Right ventricle myocardium inferior (tissue), 1 donor: ENCODE measurements at regions of chr10 and their contacts with region 1.

Region 1: GRCh38 chr10:103835096-103836050 is 20.0 kb downstream of the SH3PXD2A start:
- DNase-seq: peak; percentile 86
- ATAC-seq: peak; percentile 73

Region 2: GRCh38 chr10:103692952-103693802 is 142.2 kb before region 1 on chr10:
- intact Hi-C with region 1: no loop called
- DNase-seq: no peak
- ATAC-seq: no peak

Region 3: GRCh38 chr10:103759100-103759781 is 76.1 kb before region 1 on chr10:
- intact Hi-C with region 1: loop called (anchors 5 kb)
- DNase-seq: no peak
- ATAC-seq: peak; percentile 83

Region 4: GRCh38 chr10:103781329-103782061 is 53.9 kb before region 1 on chr10:
- intact Hi-C with region 1: loop called (anchors 5 kb)
- DNase-seq: no peak
- ATAC-seq: no peak

Region 5: GRCh38 chr10:103958996-103959395 is 123.6 kb after region 1 on chr10:
- intact Hi-C with region 1: no loop called
- DNase-seq: no peak
- ATAC-seq: no peak